IMR-90 (cell line): ENCODE measurements at regions of chr2 and their contacts with region 1.

Region 1: DNA sequence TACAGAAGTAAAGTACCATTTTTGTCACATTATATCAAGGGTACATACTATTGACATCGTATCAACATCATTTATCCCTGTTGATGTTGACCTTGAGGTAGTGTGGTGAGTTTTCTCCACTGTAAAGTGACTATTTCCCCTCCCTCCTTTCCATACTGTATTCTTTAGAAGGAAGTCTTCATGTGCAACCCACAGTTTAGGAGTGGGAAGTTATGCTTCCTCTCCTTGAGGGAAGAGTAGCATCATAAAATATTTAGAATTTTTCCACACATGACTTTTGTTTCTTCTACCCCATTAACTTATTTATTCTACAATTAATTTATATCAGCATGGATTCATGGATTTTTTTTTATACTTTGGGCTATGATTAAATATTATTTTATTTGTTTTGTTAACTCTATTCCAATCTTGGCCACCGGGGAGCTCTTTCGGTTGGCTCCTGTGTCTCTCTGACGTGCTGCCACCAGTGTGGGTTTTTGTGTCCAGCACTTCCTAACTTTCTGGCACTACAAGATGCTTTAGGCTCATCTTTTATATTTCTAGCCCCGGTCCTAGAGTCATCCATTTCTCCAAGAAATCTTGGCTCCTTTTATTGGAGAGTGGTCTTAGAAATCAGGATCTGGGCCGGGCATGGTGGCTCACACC is 19.0 kb downstream of the AQP12B start:
- DNase-seq: no peak
- ATAC-seq: no peak
- H3K4me3 ChIP-seq: no peak overlapping the region
- H3K27ac ChIP-seq: no peak overlapping the region
- H3K4me1 ChIP-seq: no peaks in the 10 kb centered on the region
- H3K27me3 ChIP-seq: peaks cover 8% of the 10 kb centered on the region; the same call in 1 of the 2 replicates
- CTCF ChIP-seq: no peak
- POLR2A ChIP-seq: no peak
- RAD21 ChIP-seq: no peak

Region 2: GRCh38 chr2:239716536-239717318 is 946.9 kb before region 1 on chr2:
- CTCF ChIA-PET with region 1: no interaction called
- POLR2A ChIA-PET with region 1: no interaction called
- dilution Hi-C with region 1: no loop called
- in situ Hi-C with region 1: no loop called
- intact Hi-C with region 1: no loop called
- DNase-seq: no peak
- ATAC-seq: no peak
- H3K4me3 ChIP-seq: no peak overlapping the region
- H3K27ac ChIP-seq: no peak overlapping the region
- H3K4me1 ChIP-seq: no peaks in the 10 kb centered on the region
- H3K27me3 ChIP-seq: no peaks in the 10 kb centered on the region
- CTCF ChIP-seq: no peak
- POLR2A ChIP-seq: no peak
- RAD21 ChIP-seq: no peak

Region 3: DNA sequence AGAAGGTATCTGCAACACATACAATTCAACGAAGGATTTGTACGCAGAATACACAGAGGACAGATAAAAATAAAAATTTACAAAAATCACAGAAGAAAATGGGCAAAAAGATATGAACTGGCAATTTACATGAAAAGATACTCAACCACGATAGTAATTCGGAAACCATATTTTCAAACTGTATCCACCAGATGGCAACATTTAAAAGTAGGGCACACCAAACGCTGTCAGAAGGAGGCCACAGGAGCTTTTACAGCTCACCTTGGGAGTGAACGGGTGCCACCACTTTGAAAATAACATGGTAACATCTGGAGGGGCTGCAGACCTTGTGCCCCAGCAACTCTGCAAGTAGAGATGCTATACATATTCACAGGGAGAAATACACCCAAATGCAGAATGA is 146.5 kb after region 1 on chr2:
- CTCF ChIA-PET with region 1: no interaction called
- POLR2A ChIA-PET with region 1: no interaction called
- dilution Hi-C with region 1: no loop called
- in situ Hi-C with region 1: no loop called
- intact Hi-C with region 1: loop called (anchors 10 kb)
- DNase-seq: no peak
- ATAC-seq: no peak
- H3K4me3 ChIP-seq: no peak overlapping the region
- H3K27ac ChIP-seq: no peak overlapping the region
- H3K4me1 ChIP-seq: no peaks in the 10 kb centered on the region
- H3K27me3 ChIP-seq: peaks cover 7% of the 10 kb centered on the region
- CTCF ChIP-seq: no peak
- POLR2A ChIP-seq: no peak
- RAD21 ChIP-seq: no peak